HepG2 (cell line): ENCODE measurements at regions of chr1 and their contacts with region 1.

Region 1: GRCh38 chr1:15847100-15847892 is at the start of gene SPEN:
- DNase-seq: peak; percentile 92
- ATAC-seq: peak; percentile 84
- H3K4me3 ChIP-seq: peak within 1 kb of the TSS; percentile 83 to 98 (median 98)
- H3K27ac ChIP-seq: peak within 1 kb of the TSS; percentile 99
- H3K4me1 ChIP-seq: peaks cover 58% of the 10 kb centered on the region
- H3K27me3 ChIP-seq: no peaks in the 10 kb centered on the region; a peak in 1 of 5 replicates
- CTCF ChIP-seq: peak; percentile 2
- EP300 ChIP-seq: no peak
- POLR2A ChIP-seq: peak; percentile 79 to 84
- RAD21 ChIP-seq: peak; percentile 20; the same call in 1 of the 2 replicates
- total RNA-seq, gene SPEN: 14.0 and 25.1 TPM in 2 replicates

Region 2: GRCh38 chr1:15803354-15803753 is 43.9 kb before region 1 on chr1:
- CTCF ChIA-PET with region 1: no interaction called
- POLR2A ChIA-PET with region 1: interaction called, 10 read pairs
- in situ Hi-C with region 1: no loop called
- intact Hi-C with region 1: loop called (anchors 5 kb)
- DNase-seq: peak; percentile 48
- ATAC-seq: no peak
- H3K4me3 ChIP-seq: no peak overlapping the region
- H3K27ac ChIP-seq: no peak overlapping the region
- H3K4me1 ChIP-seq: peaks cover 64% of the 10 kb centered on the region
- H3K27me3 ChIP-seq: no peaks in the 10 kb centered on the region
- CTCF ChIP-seq: peak; percentile 70
- EP300 ChIP-seq: no peak
- POLR2A ChIP-seq: no peak
- RAD21 ChIP-seq: peak; percentile 62

Region 3: DNA sequence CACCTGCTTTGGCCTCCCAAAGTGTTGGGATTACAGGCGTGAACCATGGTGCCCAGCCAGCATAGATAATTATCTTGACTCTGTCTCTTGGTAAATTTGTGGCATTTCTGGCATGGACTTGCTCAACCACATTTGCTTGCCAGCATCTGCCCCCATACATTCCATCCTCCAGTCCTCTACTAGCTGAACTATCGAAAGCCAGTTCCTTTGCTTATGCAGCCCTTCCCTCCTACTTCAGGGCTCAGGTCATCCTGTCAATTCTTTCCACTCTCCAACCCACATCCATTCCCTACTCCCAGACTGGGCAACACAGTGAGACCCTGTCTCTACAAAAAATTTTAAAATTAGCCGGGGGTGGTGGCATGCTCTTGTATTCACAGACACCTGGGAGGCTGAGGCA is 26.8 kb before region 1 on chr1:
- CTCF ChIA-PET with region 1: no interaction called
- POLR2A ChIA-PET with region 1: interaction called, 4 read pairs
- in situ Hi-C with region 1: no loop called
- intact Hi-C with region 1: loop called (anchors 1 kb)
- DNase-seq: no peak
- ATAC-seq: no peak
- H3K4me3 ChIP-seq: no peak overlapping the region
- H3K27ac ChIP-seq: no peak overlapping the region
- H3K4me1 ChIP-seq: peaks cover 17% of the 10 kb centered on the region
- H3K27me3 ChIP-seq: no peaks in the 10 kb centered on the region
- CTCF ChIP-seq: no peak
- EP300 ChIP-seq: no peak
- POLR2A ChIP-seq: no peak
- RAD21 ChIP-seq: no peak

Region 4: DNA sequence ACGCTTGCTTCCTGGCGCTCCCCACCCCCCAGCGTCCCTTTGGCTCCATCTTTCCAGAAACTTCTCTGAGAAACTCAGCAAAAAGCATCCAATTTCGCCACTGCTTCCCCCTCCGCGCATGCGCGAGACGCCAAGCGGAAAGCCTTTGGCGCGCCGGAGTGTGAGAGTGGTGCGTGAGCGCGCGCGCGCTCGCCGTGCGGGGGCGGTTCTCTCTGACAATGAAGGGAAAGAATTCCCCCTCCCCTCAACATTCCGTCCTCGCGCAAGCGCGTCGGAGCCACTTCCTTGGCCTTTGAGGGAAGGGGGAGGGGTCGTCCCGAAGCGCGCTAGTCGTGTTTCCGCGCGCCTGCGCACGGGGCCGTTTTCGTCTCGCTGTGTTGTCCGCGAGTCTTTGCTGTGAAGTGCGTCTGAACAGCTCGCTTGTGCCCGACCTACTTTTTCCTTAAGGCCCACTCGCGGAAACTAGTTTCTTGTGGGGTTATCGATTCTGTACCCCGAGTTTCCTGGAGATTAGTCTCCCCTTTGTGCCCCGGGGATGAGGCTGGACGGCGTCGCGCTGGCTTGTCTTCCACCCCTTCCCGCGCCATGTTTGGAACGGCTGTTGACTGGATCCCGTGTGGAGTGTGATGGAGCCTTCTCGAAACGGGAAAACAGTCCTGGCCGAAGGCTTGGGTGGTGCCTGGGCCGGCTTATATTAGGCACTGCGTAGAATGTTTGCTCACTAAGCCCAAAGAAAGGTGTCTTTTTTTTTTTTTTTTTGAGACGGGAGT is 11.4 kb before region 1 on chr1:
- CTCF ChIA-PET with region 1: no interaction called
- POLR2A ChIA-PET with region 1: interaction called, 208 read pairs
- in situ Hi-C with region 1: no loop called
- intact Hi-C with region 1: loop called (anchors 1 kb)
- DNase-seq: peak; percentile 98
- ATAC-seq: peak; percentile 55
- H3K4me3 ChIP-seq: peak overlapping the region; percentile 77 to 83 (median 78); a peak in 5 of 6 replicates
- H3K27ac ChIP-seq: peak overlapping the region; percentile 100
- H3K4me1 ChIP-seq: peaks cover 42% of the 10 kb centered on the region
- H3K27me3 ChIP-seq: no peaks in the 10 kb centered on the region; a peak in 1 of 5 replicates
- CTCF ChIP-seq: no peak
- EP300 ChIP-seq: peak in 1 of 2 experiments; percentile 61; a peak in 2 of 4 replicates
- POLR2A ChIP-seq: peak; percentile 82 to 84
- RAD21 ChIP-seq: 0 out of 2 replicates have a peak, but pooled peaks have one; percentile 18

Region 5: GRCh38 chr1:15858069-15858670 is 10.9 kb after region 1 on chr1:
- CTCF ChIA-PET with region 1: no interaction called
- POLR2A ChIA-PET with region 1: interaction called, 16 read pairs
- in situ Hi-C with region 1: no loop called
- intact Hi-C with region 1: no loop called
- DNase-seq: no peak
- ATAC-seq: no peak
- H3K4me3 ChIP-seq: no peak overlapping the region
- H3K27ac ChIP-seq: no peak overlapping the region
- H3K4me1 ChIP-seq: no peaks in the 10 kb centered on the region
- H3K27me3 ChIP-seq: no peaks in the 10 kb centered on the region; a peak in 1 of 5 replicates
- CTCF ChIP-seq: no peak
- EP300 ChIP-seq: no peak
- POLR2A ChIP-seq: no peak
- RAD21 ChIP-seq: no peak

Region 6: GRCh38 chr1:15885701-15886610 is 38.7 kb after region 1 on chr1:
- CTCF ChIA-PET with region 1: no interaction called
- POLR2A ChIA-PET with region 1: interaction called, 12 read pairs
- in situ Hi-C with region 1: no loop called
- intact Hi-C with region 1: loop called (anchors 5 kb)
- DNase-seq: peak; percentile 88
- ATAC-seq: peak; percentile 99
- H3K4me3 ChIP-seq: peak overlapping the region; percentile 53 to 66 (median 55); a peak in 5 of 6 replicates
- H3K27ac ChIP-seq: peak overlapping the region; percentile 77
- H3K4me1 ChIP-seq: peaks cover 26% of the 10 kb centered on the region
- H3K27me3 ChIP-seq: no peaks in the 10 kb centered on the region
- CTCF ChIP-seq: 0 out of 2 replicates have a peak, but pooled peaks have one; percentile 8
- EP300 ChIP-seq: no peak
- POLR2A ChIP-seq: 0 out of 4 replicates have a peak, but pooled peaks of 1 of the 2 experiments have one; percentile 18
- RAD21 ChIP-seq: 0 out of 2 replicates have a peak, but pooled peaks have one; percentile 11